ENCODE measurements at regions of chr1 and their contacts with region 1.

Region 1: DNA sequence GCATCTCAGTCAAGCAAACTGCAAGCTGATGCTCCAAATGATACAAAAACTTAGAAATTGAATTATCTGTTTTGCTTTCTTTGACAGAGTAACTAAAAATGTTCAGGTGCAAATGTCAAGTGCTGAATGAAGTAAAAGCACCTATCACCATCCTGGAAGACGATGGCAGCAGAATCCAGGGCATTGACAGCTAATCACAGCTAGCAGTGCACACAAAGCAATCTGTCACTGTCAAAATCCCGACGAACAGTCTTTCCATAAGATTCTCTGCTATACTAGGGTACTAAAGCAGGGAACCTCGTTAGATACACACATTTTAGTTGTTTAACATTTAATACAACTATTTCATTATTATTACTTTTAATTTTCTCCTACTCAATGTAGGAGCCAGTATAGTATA is 233.3 kb downstream of the BRINP3 start:
- DNase-seq: no peak
- H3K4me3 Mint-ChIP-seq: no peak overlapping the region
- H3K27ac Mint-ChIP-seq: no peak overlapping the region
- H3K4me1 Mint-ChIP-seq: no peaks in the 10 kb centered on the region
- H3K27me3 Mint-ChIP-seq: no peaks in the 10 kb centered on the region

Region 2: DNA sequence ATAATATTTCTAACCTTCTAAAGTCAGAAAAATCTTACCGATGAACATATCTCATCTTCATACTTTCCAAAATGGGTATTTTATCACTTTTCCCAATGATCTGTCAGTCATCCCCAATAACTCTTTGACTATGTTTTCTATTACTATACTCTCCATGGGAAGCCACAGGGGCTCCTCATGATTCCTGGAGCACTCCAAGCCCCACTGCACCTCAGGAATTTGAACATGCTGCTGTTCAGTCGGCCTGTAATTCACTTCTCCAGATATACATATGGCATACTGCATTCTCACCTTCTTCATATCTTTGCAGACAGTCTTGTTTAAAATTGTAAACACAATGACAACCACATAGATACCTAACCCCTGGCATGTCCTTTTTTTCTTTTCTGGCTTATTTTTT is 99.8 kb before region 1 on chr1:
- intact Hi-C with region 1: no loop called
- DNase-seq: no peak
- H3K4me3 Mint-ChIP-seq: no peak overlapping the region
- H3K27ac Mint-ChIP-seq: no peak overlapping the region
- H3K4me1 Mint-ChIP-seq: no peaks in the 10 kb centered on the region
- H3K27me3 Mint-ChIP-seq: no peaks in the 10 kb centered on the region

Region 3: DNA sequence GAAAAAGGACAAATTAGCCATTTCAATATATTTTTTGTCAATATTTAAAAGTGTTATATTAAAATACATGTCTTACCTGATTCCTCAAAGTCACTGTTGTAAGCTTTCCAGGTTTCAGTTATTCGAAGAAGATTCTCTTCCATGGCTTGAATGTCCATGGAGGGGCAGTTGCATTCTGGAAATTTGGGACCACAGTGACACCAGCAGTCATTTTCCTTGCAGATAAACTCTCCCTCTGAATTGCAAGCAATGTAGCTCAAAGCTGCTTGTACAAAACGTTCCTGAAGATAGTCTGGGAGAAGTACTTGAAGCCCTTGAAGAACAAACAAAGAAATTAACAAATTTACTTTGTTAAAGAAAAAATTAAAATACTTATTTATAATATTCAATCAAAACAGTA is 18.4 kb before region 1 on chr1:
- intact Hi-C with region 1: loop called (anchors 2 kb)
- DNase-seq: no peak
- H3K4me3 Mint-ChIP-seq: no peak overlapping the region
- H3K27ac Mint-ChIP-seq: no peak overlapping the region
- H3K4me1 Mint-ChIP-seq: no peaks in the 10 kb centered on the region
- H3K27me3 Mint-ChIP-seq: no peaks in the 10 kb centered on the region

Region 4: GRCh38 chr1:190258003-190258402 is 13.6 kb after region 1 on chr1:
- intact Hi-C with region 1: no loop called
- DNase-seq: no peak
- H3K4me3 Mint-ChIP-seq: no peak overlapping the region
- H3K27ac Mint-ChIP-seq: no peak overlapping the region
- H3K4me1 Mint-ChIP-seq: no peaks in the 10 kb centered on the region
- H3K27me3 Mint-ChIP-seq: no peaks in the 10 kb centered on the region

Region 5: DNA sequence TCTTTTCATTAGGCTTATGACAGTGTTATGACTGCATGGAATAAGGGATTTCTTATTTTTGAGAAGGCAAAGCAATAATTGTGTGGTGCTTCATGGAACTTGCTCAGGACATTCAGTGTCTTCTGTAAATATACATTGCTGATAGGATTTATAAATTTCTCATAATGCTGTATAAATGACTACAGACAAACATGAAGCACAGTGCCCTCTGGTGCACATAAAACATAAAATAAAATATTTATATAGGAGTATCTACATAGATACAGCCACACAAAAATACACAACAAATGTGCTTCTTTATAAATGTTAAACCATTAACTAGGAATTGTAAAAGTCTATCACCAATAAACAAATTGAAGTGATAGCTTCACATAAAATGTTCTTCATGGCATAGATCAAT is 209.1 kb after region 1 on chr1:
- intact Hi-C with region 1: no loop called
- DNase-seq: no peak
- H3K4me3 Mint-ChIP-seq: no peak overlapping the region
- H3K27ac Mint-ChIP-seq: no peak overlapping the region
- H3K4me1 Mint-ChIP-seq: no peaks in the 10 kb centered on the region
- H3K27me3 Mint-ChIP-seq: no peaks in the 10 kb centered on the region

Measured in activated CD4-positive, alpha-beta T cell treated with anti-CD3 and anti-CD28 coated beads, Interleukin-2, amount 10 ng/mL, durations not matched to agents 24 days and 14 days (primary cell).